ENCODE measurements at regions of chr4 and their contacts with region 1.

Region 1: DNA sequence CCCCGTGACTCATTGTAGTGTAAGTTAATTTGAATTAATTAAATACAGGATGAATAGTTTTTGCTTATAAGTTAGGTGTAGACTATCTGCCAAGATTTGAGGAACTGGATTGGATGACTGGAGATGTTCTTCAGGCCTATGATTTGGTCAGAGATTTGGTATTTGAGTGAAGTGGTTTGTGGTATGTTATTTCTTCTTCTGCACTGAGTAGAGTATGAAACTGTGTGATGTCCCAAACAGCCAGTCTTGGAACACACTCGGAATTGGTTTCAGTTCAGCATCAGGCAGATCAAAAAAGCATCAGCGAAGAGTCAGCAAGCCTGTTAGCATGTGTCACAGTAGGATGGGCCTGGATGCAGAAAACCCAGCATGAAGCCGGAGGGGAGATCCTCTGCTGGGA is 294.1 kb downstream of the ARHGAP10 start:
- DNase-seq: no peak
- H3K4me3 ChIP-seq: no peak overlapping the region
- H3K4me3 Mint-ChIP-seq: no peak overlapping the region
- H3K27ac ChIP-seq: no peak overlapping the region
- H3K27ac Mint-ChIP-seq: no peak overlapping the region
- H3K4me1 ChIP-seq: no peaks in the 10 kb centered on the region
- H3K4me1 Mint-ChIP-seq: peaks cover 0 to 3% (median 0%) of the 10 kb centered on the region in 4 donors
- H3K27me3 ChIP-seq: no peaks in the 10 kb centered on the region
- H3K27me3 Mint-ChIP-seq: no peaks in the 10 kb centered on the region

Region 2: GRCh38 chr4:148776941-148777340 is 751.0 kb after region 1 on chr4:
- CTCF ChIA-PET with region 1: no interaction called
- POLR2A ChIA-PET with region 1: no interaction called
- intact Hi-C with region 1: loop called (anchors 10 kb)
- DNase-seq: no peak
- H3K4me3 ChIP-seq: no peak overlapping the region
- H3K4me3 Mint-ChIP-seq: no peak overlapping the region
- H3K27ac ChIP-seq: no peak overlapping the region
- H3K27ac Mint-ChIP-seq: no peak overlapping the region
- H3K4me1 ChIP-seq: no peaks in the 10 kb centered on the region
- H3K4me1 Mint-ChIP-seq: no peaks in the 10 kb centered on the region
- H3K27me3 ChIP-seq: no peaks in the 10 kb centered on the region
- H3K27me3 Mint-ChIP-seq: no peaks in the 10 kb centered on the region